Endothelial cell of umbilical vein (primary cell): ENCODE measurements at regions of chr16 and their contacts with region 1.

Region 1: DNA sequence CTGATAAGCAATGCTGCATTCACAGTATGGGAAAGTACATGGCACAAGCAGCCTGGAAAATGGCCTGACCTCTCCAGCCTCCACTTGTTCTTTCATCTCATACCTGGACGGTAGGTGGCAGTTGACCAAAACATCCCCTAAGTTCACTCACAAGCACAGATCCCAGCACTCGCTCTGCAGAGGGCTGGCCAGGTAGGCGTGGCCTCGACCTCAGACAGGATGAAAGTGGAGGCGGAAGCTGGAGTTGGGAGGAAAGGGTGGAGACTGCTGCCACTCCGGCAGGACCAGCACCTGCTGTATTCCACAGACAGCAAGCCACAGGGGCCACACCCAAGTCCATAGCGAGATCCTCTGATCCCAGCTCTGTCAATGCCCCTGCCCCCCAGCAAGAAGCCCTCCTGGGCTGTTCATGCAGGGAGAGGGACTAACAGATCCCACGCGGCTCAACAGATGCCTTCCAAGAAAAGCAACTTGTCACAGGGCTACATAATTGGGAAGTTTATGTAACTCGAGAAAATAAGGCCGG is 31.3 kb downstream of the ZCCHC14 start:
- DNase-seq: peak; percentile 77
- H3K4me3 ChIP-seq: peak overlapping the region in 1 of 3 experiments; percentile 18
- H3K27ac ChIP-seq: peak overlapping the region; percentile 60
- H3K4me1 ChIP-seq: peaks cover 65% of the 10 kb centered on the region
- H3K27me3 ChIP-seq: no peaks in the 10 kb centered on the region
- CTCF ChIP-seq: peak; percentile 29 to 37
- POLR2A ChIP-seq: no peak

Region 2: GRCh38 chr16:87216474-87217275 is 244.9 kb before region 1 on chr16:
- CTCF ChIA-PET with region 1: no interaction called
- POLR2A ChIA-PET with region 1: no interaction called
- dilution Hi-C with region 1: no loop called
- intact Hi-C with region 1: no loop called
- DNase-seq: peak; percentile 28
- H3K4me3 ChIP-seq: peak overlapping the region in 2 of 3 experiments; percentile 8 to 12
- H3K27ac ChIP-seq: no peak overlapping the region
- H3K4me1 ChIP-seq: no peaks in the 10 kb centered on the region
- H3K27me3 ChIP-seq: peaks cover 4 to 19% of the 10 kb centered on the region in 2 experiments
- CTCF ChIP-seq: no peak
- POLR2A ChIP-seq: no peak

Region 3: GRCh38 chr16:87332150-87332549 is 129.4 kb before region 1 on chr16:
- CTCF ChIA-PET with region 1: no interaction called
- POLR2A ChIA-PET with region 1: no interaction called
- dilution Hi-C with region 1: no loop called
- intact Hi-C with region 1: no loop called
- DNase-seq: no peak
- H3K4me3 ChIP-seq: no peak overlapping the region
- H3K27ac ChIP-seq: no peak overlapping the region
- H3K4me1 ChIP-seq: no peaks in the 10 kb centered on the region
- H3K27me3 ChIP-seq: no peaks in the 10 kb centered on the region
- CTCF ChIP-seq: no peak
- POLR2A ChIP-seq: no peak

Region 4: DNA sequence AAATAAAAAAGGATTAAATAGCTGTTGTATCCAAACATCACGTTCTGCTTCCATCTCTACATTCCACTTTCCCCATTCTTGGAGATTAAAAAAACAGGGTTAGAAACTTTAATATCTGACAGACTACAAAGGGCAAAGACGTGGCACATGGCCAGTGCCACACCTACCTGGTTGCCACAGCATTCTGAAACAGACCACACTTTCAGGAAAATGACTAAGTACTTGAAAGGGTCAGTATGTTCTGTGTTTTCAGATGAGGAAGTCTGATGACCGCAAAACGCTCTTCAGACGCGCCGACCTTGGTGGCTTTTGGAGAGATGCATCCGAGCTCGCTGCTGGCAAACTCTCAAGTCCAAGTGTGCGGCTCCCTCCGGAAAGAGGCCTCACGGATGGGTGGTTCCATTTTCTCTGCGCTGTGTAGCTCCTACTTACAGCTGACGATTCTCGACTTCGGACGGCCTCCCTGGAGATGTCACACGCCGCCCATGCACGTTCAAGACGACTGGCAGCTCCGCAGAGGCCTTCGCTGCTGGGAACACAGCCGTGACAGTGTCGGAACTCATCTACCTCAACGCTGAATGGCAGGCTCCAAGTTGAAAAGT is 53.9 kb before region 1 on chr16:
- CTCF ChIA-PET with region 1: no interaction called
- POLR2A ChIA-PET with region 1: no interaction called
- dilution Hi-C with region 1: no loop called
- intact Hi-C with region 1: loop called (anchors 1 kb)
- DNase-seq: peak; percentile 95
- H3K4me3 ChIP-seq: peak overlapping the region in 1 of 3 experiments; percentile 39
- H3K27ac ChIP-seq: peak overlapping the region; percentile 82
- H3K4me1 ChIP-seq: peaks cover 20% of the 10 kb centered on the region
- H3K27me3 ChIP-seq: no peaks in the 10 kb centered on the region
- CTCF ChIP-seq: no peak
- POLR2A ChIP-seq: peak; percentile 28

Region 5: DNA sequence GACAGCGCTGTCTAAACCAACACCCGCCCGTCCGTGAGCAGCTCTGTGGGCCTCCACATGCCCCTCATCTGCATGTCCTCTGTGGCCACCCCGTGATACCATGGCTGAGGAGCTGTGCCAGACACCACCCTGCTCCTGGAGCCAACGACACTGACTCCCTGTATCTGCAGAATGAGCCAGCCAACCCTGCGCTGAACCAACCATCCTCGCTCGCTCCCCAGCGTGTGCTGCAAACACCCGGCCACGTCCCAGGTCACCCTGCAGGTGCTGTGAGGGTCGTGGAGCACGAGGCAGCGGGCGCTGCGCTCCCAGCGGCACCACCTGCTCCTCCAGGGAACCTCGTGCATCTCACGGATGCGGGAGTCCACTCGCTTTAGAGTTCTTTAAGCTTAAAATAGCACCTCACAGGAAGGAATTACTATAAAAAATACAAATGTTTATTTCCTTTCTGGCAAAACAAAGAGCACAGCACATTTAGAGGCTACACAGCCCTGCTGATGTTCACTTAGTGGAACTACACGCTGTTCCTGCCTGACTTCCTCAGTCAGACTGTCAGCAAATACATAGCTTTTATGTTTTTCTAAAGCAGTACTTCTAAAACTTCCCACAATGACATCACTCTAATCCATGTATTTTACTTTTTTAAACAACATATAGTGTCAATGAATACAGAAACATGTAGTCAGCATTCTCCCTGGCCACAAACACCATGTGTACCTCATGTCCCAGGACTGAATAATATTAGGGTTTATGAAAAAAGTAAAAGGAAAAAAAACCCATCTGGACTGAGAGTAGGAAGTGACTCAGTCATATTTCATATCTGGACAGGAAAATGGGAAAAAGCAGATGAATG is 25.9 kb before region 1 on chr16:
- CTCF ChIA-PET with region 1: interaction called, 9 read pairs
- POLR2A ChIA-PET with region 1: no interaction called
- dilution Hi-C with region 1: no loop called
- intact Hi-C with region 1: loop called (anchors 1 kb)
- DNase-seq: peak; percentile 95
- H3K4me3 ChIP-seq: peak overlapping the region in 2 of 3 experiments; percentile 10
- H3K27ac ChIP-seq: peak overlapping the region; percentile 90
- H3K4me1 ChIP-seq: peaks cover 18% of the 10 kb centered on the region
- H3K27me3 ChIP-seq: no peaks in the 10 kb centered on the region
- CTCF ChIP-seq: no peak
- POLR2A ChIP-seq: no peak

Region 6: DNA sequence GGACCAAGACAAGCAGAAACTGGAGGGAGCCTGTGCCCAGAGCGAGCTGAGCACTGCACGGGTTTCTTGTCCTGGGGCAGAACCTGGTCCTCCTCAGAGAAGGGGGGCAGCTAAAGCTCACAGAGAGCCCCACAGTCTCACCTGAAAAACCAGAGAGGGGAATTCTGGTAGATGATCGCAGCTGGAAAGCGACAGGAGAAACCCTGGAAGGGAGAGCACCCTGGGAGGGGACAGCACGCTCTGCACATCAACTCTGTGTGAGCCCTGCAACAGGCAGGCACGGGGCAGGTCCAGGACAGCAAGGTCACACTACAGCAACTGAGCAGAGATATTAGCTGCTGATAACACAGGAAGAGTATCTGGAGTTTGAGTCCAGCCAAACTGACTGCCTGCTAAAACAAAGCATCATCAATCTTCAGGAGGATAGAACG is 13.1 kb after region 1 on chr16:
- CTCF ChIA-PET with region 1: interaction called, 16 read pairs
- POLR2A ChIA-PET with region 1: interaction called, 3 read pairs
- dilution Hi-C with region 1: no loop called
- intact Hi-C with region 1: no loop called
- DNase-seq: no peak
- H3K4me3 ChIP-seq: no peak overlapping the region
- H3K27ac ChIP-seq: no peak overlapping the region
- H3K4me1 ChIP-seq: peaks cover 9% of the 10 kb centered on the region
- H3K27me3 ChIP-seq: no peaks in the 10 kb centered on the region
- CTCF ChIP-seq: no peak
- POLR2A ChIP-seq: no peak

Region 7: GRCh38 chr16:87492721-87493607 is 31.4 kb after region 1 on chr16 and contains the start of gene ZCCHC14:
- CTCF ChIA-PET with region 1: interaction called, 9 read pairs
- POLR2A ChIA-PET with region 1: interaction called, 5 read pairs
- dilution Hi-C with region 1: no loop called
- intact Hi-C with region 1: loop called (anchors 1 kb)
- DNase-seq: peak; percentile 99
- H3K4me3 ChIP-seq: peak within 1 kb of the TSS in 2 of 3 experiments; percentile 47 to 56
- H3K27ac ChIP-seq: peak within 1 kb of the TSS; percentile 68
- H3K4me1 ChIP-seq: peaks cover 23% of the 10 kb centered on the region
- H3K27me3 ChIP-seq: no peaks in the 10 kb centered on the region
- CTCF ChIP-seq: no peak
- POLR2A ChIP-seq: peak; percentile 73
- total RNA-seq, gene ZCCHC14: 30.9 and 34.0 TPM in 2 replicates

Region 8: GRCh38 chr16:87560428-87561199 is 99.1 kb after region 1 on chr16:
- CTCF ChIA-PET with region 1: no interaction called
- POLR2A ChIA-PET with region 1: no interaction called
- dilution Hi-C with region 1: no loop called
- intact Hi-C with region 1: no loop called
- DNase-seq: no peak
- H3K4me3 ChIP-seq: no peak overlapping the region
- H3K27ac ChIP-seq: no peak overlapping the region
- H3K4me1 ChIP-seq: peaks cover 9% of the 10 kb centered on the region
- H3K27me3 ChIP-seq: peaks cover 2 to 3% of the 10 kb centered on the region in 2 experiments
- CTCF ChIP-seq: no peak
- POLR2A ChIP-seq: no peak